ENCODE measurements at regions of chr22 and their contacts with region 1.

Region 1: DNA sequence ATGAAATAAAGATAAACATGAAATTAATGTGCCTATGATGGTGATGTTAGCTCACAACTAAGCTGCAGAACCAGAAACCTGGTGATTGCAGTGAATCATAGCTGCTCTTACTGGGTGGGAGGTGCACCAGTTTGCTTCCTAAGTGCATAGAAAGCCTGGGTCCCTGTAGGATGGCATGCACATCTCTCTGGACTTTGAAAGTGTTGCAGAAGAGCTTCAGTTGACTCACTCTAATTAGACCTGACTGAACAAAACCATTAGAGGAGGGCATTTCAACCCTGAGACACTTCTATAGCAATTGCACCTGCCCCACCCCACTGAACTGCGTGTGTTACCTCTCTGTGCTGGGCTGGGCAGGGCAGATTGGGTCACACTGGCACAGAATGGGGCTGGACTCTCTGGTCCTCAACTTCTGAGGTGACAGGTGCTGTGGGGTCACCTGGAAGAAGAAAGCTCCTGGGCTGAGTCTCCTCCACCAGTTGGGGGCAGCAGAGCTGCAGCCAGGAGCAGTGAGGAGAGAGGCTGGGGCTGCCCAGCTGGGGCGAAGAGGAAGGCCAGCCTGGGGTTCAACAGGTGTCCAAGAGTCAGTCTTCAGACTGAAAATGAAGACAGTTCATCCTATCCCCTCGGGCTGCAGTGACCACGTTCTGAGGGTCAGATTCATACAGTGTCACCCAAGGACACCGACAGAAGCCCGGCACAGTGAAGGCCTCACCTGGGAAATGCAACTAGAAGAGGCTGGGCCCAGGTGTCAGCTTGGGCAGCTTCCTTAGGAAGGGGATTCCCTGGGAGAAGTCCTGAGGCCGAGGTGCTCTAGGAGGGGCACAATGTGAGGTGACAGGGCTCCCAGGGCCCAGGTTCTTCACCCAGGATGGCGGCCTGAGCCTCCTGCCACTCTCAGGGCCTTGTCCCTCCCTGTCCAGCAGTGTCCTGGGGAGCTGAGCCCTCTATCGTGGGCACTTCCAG is 58.1 kb downstream of the GGTLC2 start:
- DNase-seq: peak; percentile 64

Region 2: GRCh38 chr22:22767876-22768602 is 65.5 kb after region 1 on chr22:
- intact Hi-C with region 1: loop called (anchors 10 kb)
- DNase-seq: no peak

Region 3: GRCh38 chr22:23113067-23113846 is 410.7 kb after region 1 on chr22:
- intact Hi-C with region 1: no loop called
- DNase-seq: no peak